ENCODE measurements at regions of chrX and their contacts with region 1.

Region 1: DNA sequence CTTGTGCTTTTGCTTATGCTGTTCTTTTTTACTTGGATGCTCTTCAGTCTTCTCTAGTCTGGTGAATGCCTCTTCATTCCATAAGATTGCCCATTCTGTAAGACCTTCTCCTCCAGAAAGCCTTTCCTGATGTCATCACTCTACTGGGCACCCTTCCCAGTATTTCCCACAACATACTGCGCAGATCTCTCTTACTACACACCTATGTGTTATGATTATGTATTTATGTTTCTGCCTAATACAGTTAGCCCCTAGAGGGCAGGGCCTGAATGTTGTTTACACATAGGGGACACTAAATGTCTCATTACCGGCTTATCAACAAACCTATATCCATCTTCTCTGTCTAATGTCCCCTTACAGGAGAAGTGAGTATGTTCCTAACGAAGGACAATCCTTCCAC is 21.1 kb downstream of the AIFM1 start:
- DNase-seq: no peak
- H3K4me3 Mint-ChIP-seq: no peak overlapping the region
- H3K27ac Mint-ChIP-seq: no peak overlapping the region
- H3K4me1 Mint-ChIP-seq: peaks cover 3% of the 10 kb centered on the region
- H3K27me3 Mint-ChIP-seq: no peaks in the 10 kb centered on the region

Region 2: DNA sequence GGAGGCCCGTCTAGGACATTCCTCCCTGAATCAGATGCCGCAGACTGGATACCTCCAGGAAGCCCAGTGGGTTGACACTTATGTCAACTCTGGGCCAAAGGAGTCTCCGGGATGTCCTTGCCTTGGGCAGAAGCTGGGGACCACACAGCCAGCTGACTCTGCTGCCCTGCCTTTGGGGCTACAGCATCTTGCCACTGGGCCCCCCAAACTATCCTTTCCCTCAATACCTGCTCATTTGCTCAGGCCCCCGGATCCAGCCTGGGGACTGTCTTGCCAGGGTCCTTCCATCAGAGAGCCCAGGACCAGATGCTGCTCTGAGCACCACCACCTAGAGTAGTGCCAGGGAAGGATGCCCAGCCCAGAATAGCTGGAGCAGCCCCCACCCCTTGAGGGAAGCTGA is 46.3 kb after region 1 on chrX:
- intact Hi-C with region 1: loop called (anchors 5 kb)
- DNase-seq: no peak
- H3K4me3 Mint-ChIP-seq: no peak overlapping the region
- H3K27ac Mint-ChIP-seq: no peak overlapping the region
- H3K4me1 Mint-ChIP-seq: peaks cover 7% of the 10 kb centered on the region
- H3K27me3 Mint-ChIP-seq: no peaks in the 10 kb centered on the region